Common myeloid progenitor, CD34-positive (primary cell): ENCODE measurements at regions of chr12 and their contacts with region 1.

Region 1: GRCh38 chr12:111673503-111673902 is 12.3 kb downstream of the BRAP start:
- DNase-seq: peak; percentile 20 to 33 (median 20)
- H3K4me3 ChIP-seq: no peak overlapping the region
- H3K27ac ChIP-seq: no peak overlapping the region
- H3K4me1 ChIP-seq: no peaks in the 10 kb centered on the region
- H3K27me3 ChIP-seq: no peaks in the 10 kb centered on the region

Region 2: DNA sequence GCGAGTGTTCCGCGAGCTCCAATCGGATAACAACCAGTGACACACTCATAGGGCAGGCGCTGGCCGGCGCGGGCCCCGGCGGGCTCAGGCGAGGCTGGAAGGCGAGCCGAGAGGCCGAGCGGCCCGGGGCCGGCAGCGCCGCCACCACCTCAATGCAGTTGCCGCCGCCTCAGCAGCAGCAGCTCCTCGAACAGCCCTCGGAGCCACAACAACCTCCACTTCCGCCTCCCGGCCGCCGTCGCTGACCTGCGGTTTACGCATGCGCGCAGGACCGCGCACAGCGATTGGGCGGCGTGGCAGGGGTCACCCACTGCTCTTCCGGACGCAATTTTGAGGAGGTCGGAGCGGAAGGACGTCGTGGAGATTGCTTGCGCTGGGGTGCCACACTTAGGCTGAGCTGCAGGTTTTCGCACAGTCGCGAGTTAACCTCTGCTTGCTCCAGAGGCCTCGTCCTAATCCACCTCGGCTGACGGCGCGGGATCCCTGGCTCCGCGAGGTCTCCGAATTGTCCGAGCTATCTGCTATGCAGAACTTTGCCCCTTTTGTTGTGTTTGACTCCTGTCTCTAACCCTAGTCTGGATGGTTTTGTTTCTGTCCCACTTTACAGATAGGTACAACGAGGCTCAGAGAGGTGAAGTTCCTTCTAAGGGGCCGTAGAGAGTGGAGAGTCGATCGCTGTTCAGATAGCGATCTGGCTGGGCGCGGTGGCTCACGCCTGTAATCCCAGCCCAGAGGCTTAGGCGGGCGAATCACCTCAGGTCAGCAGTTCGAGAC is 12.4 kb after region 1 on chr12 and contains the starts of genes ACAD10 and BRAP:
- CTCF ChIA-PET with region 1: interaction called, 12 read pairs
- POLR2A ChIA-PET with region 1: no interaction called
- DNase-seq: peak; percentile 93 to 95 (median 95)
- H3K4me3 ChIP-seq: peak within 1 kb of the TSS; percentile 80 to 99 (median 92)
- H3K27ac ChIP-seq: peak within 1 kb of the TSS; percentile 90 to 96
- H3K4me1 ChIP-seq: peaks cover 7 to 28% (median 22%) of the 10 kb centered on the region in 4 experiments
- H3K27me3 ChIP-seq: no peaks in the 10 kb centered on the region

Region 3: GRCh38 chr12:112005419-112006395 is 332.2 kb after region 1 on chr12:
- CTCF ChIA-PET with region 1: no interaction called
- POLR2A ChIA-PET with region 1: no interaction called
- DNase-seq: no peak
- H3K4me3 ChIP-seq: no peak overlapping the region
- H3K27ac ChIP-seq: peak overlapping the region in 1 of 2 experiments; percentile 72
- H3K4me1 ChIP-seq: peaks cover 6 to 15% (median 11%) of the 10 kb centered on the region in 4 experiments
- H3K27me3 ChIP-seq: peaks cover 0 to 30% (median 7%) of the 10 kb centered on the region in 5 experiments